ENCODE measurements at regions of chr14 and their contacts with region 1.

Region 1: DNA sequence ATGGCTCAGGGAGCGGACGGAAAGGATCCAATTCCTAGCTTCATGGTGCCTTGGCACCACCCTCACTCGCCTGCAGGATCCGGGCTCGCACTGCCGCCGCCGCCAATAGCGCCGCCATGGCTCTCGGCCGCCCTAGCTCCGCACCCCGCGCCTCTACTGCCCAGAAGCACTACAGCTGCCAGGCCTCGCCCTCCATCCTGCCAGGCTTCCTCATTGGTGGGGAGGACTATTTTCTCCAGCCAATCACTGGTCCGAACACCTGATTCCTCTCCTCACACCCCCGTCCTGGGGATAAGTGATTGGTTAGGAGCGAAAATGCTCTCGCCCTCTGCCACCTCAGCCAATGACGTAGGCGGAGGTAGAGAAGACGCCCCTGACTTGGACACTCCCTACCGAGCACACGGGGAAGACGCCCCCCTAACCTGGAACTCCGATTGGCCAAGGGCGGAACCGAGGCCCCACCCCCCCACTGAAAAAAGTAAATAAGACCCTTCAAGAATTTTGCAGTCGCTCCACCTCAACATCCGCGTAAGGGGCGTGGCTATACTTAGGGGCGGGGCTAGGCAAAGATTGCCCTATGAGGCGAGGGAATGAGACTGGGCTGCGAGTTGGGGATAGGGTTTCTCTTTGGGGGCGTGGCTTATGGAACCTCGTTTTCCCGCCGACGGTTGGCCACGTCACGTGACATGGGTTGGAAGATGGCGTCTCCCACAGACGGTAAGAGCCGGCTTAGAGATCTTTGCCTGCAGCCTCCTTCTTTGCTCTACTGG is at the starts of genes ALDH6A1 and LIN52:
- DNase-seq: peak; percentile 100
- H3K4me3 Mint-ChIP-seq: peak within 1 kb of the TSS; percentile 94
- H3K27ac Mint-ChIP-seq: peak within 1 kb of the TSS; percentile 94
- H3K4me1 Mint-ChIP-seq: peaks cover 45% of the 10 kb centered on the region
- H3K27me3 Mint-ChIP-seq: peaks cover 4% of the 10 kb centered on the region
- total RNA-seq, gene ALDH6A1: 10.8 and 11.0 TPM in 2 replicates
- total RNA-seq, gene LIN52: 15.9 and 17.2 TPM in 2 replicates

Region 2: GRCh38 chr14:73136387-73137225 is 947.9 kb before region 1 on chr14 and contains the start of gene PSEN1:
- intact Hi-C with region 1: loop called (anchors 10 kb)
- DNase-seq: peak; percentile 98
- H3K4me3 Mint-ChIP-seq: peak within 1 kb of the TSS; percentile 86
- H3K27ac Mint-ChIP-seq: peak within 1 kb of the TSS; percentile 100
- H3K4me1 Mint-ChIP-seq: peaks cover 19% of the 10 kb centered on the region
- H3K27me3 Mint-ChIP-seq: no peaks in the 10 kb centered on the region
- total RNA-seq, gene PSEN1: 41.1 and 41.9 TPM in 2 replicates

Region 3: DNA sequence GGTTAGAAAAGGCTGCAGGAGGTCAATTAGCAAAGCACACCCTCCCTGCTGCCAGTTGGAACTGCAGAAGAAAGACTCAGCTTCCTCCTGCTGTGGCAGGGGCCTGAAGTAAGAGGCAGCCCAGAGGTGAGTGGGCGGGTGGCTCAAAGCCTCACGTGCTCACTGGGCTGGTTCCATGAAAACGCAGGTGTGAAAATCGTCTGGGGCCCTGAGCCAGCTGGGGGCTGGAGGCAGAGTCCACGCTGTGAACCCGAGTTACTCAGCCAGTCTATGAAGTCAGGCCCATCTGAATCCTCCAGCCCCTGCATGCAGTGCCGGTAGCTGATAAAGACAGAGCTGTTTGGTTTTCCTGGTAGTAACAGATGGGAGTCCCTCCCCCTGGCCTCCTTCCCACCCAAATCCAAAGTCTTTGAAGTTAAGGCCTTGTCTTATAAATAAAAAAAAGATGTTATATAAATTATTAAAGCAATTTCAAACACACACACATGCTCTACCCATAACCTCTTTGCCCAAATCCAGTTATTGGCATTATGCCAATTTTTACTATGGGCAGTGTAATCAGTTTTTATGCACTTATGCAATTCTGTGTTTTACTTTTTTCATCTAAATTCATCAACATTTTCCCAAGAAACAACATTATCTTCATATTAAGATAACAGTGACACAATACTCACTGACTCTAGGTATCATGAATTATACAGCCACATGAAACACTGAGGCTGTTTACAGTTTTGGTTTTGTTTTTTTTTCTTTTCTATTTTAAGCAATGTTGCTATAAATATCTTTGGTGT is 312.4 kb before region 1 on chr14:
- intact Hi-C with region 1: no loop called
- DNase-seq: peak; percentile 56
- H3K4me3 Mint-ChIP-seq: peak overlapping the region; percentile 48
- H3K27ac Mint-ChIP-seq: peak overlapping the region; percentile 67
- H3K4me1 Mint-ChIP-seq: peaks cover 60% of the 10 kb centered on the region
- H3K27me3 Mint-ChIP-seq: no peaks in the 10 kb centered on the region

Region 4: GRCh38 chr14:73896521-73896920 is 187.9 kb before region 1 on chr14:
- intact Hi-C with region 1: no loop called
- DNase-seq: no peak
- H3K4me3 Mint-ChIP-seq: no peak overlapping the region
- H3K27ac Mint-ChIP-seq: peak overlapping the region; percentile 30
- H3K4me1 Mint-ChIP-seq: peaks cover 20% of the 10 kb centered on the region
- H3K27me3 Mint-ChIP-seq: no peaks in the 10 kb centered on the region

Region 5: GRCh38 chr14:73949744-73950734 is 134.4 kb before region 1 on chr14 and contains the starts of genes COQ6 and FAM161B:
- intact Hi-C with region 1: loop called (anchors 1 kb)
- DNase-seq: peak; percentile 93
- H3K4me3 Mint-ChIP-seq: peak within 1 kb of the TSS; percentile 99
- H3K27ac Mint-ChIP-seq: peak within 1 kb of the TSS; percentile 88
- H3K4me1 Mint-ChIP-seq: peaks cover 21% of the 10 kb centered on the region
- H3K27me3 Mint-ChIP-seq: no peaks in the 10 kb centered on the region
- total RNA-seq, gene COQ6: 17.9 and 19.2 TPM in 2 replicates
- total RNA-seq, gene FAM161B: 0.76 and 0.83 TPM in 2 replicates

Region 6: GRCh38 chr14:74302634-74303577 is 218.4 kb after region 1 on chr14 and contains the start of gene ABCD4:
- intact Hi-C with region 1: loop called (anchors 2 kb)
- DNase-seq: peak; percentile 79
- H3K4me3 Mint-ChIP-seq: peak within 1 kb of the TSS; percentile 99
- H3K27ac Mint-ChIP-seq: peak within 1 kb of the TSS; percentile 86
- H3K4me1 Mint-ChIP-seq: peaks cover 22% of the 10 kb centered on the region
- H3K27me3 Mint-ChIP-seq: no peaks in the 10 kb centered on the region
- total RNA-seq, gene ABCD4: 38.8 and 44.4 TPM in 2 replicates

Region 7: GRCh38 chr14:75278422-75279161 is 1194.1 kb after region 1 on chr14 and contains the start of gene FOS:
- intact Hi-C with region 1: loop called (anchors 10 kb)
- DNase-seq: peak; percentile 87
- H3K4me3 Mint-ChIP-seq: peak within 1 kb of the TSS; percentile 90
- H3K27ac Mint-ChIP-seq: peak within 1 kb of the TSS; percentile 99
- H3K4me1 Mint-ChIP-seq: peaks cover 52% of the 10 kb centered on the region
- H3K27me3 Mint-ChIP-seq: peaks cover 55% of the 10 kb centered on the region
- total RNA-seq, gene FOS: 40.9 and 41.9 TPM in 2 replicates

Measured in activated T-helper 1 cell treated with anti-CD3 and anti-CD28 coated beads, Interleukin-12 subunit alpha, Interleukin-12 subunit beta, Interleukin-2, Interleukin-4 antibody, amounts not matched to agents 30 ng/mL and 10 ng/mL and 1 ng/mL, durations not matched to agents 14 hours and 24 hours and 36 hours (primary cell).